Activated naive CD4-positive, alpha-beta T cell treated with anti-CD3 and anti-CD28 coated beads for 36 hours (primary cell): ENCODE measurements at regions of chr6 and their contacts with region 1.

Region 1: DNA sequence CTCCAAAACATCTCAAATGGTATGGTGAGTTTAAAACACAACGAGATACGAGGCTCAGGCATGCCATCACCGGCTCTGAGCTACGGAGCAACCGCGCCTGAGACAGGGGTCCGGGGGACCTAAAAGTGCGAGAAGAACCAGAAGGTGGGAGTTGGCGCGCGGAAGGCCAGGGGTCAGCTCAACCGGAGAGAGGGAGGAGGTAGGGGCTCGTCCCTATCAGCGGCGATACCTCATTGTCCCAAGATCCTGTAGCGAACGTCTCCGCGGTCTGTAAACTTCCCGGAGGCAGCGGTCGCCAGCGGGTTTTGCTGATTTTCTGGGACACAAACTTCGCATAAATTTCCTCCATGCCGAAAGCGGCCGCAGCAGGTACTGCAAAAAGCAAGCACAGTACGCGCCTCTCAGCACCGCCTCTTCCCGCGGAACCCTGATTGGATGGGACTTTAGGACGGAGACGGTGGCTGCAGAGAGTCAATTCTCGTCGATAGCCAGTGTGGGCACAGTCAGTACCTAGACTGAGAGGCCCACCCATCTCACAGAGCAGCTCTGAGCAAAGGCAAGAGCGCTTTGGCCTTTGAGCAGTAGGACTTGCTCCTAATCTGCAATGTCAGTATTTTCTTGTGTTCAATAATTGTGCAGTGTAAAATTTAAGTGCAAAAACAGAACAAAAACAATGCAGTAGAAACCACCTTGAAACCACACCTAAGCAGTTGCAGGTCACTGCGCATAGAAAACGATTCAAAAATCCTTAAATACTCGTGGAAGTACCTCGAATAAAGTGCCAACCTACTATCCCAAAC is at the start of gene NUP43:
- DNase-seq: peak; percentile 99
- H3K4me3 Mint-ChIP-seq: peak within 1 kb of the TSS; percentile 99
- H3K27ac Mint-ChIP-seq: peak within 1 kb of the TSS; percentile 87
- H3K4me1 Mint-ChIP-seq: peaks cover 31% of the 10 kb centered on the region
- H3K27me3 Mint-ChIP-seq: no peaks in the 10 kb centered on the region
- total RNA-seq, gene NUP43: 68.1 to 71.9 TPM

Region 2: DNA sequence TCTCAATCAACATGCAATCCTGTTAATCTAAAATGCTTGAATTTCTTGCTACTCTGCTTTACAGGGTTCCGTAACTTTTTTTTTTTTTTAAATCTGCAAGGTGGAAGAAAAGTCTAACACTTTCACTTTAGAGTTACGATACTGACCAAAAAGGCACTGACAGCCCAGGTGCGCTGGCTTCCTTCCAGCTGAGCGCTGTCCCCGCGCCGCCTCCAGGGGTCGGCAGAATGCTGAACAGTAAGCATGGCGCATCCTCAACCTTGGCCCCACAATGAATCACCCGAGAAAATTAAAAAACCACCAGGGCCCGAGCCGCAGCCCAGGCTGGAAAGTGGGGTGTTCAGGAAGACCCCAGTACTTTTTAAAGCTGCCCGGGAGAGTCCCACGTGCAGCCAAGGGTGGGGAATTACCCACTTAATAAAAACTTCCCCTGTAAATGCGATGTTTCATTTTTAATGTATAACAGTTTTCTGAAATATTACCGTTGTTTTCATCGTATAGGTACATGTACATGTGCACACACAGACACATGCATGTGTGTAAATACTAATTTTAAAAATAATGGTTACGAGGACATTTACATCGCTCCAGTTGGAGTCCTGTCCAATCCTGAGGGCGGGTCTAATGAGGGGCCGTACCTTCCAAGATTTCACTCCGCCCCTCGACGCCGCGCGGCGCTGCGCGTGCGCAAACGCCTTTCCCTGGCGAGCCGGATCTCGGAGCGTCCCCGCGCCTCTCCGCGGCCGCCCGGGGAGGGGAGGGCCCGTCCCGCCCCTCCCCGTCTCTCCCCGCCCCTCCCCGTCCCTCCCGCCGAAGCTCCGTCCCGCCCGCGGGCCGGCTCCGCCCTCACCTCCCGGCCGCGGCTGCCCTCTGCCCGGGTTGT is 180.6 kb before region 1 on chr6 and contains the start of gene GINM1:
- CTCF ChIA-PET with region 1: no interaction called
- intact Hi-C with region 1: loop called (anchors 1 kb)
- DNase-seq: peak; percentile 97
- H3K4me3 Mint-ChIP-seq: peak within 1 kb of the TSS; percentile 92
- H3K27ac Mint-ChIP-seq: peak within 1 kb of the TSS; percentile 89
- H3K4me1 Mint-ChIP-seq: peaks cover 26% of the 10 kb centered on the region
- H3K27me3 Mint-ChIP-seq: no peaks in the 10 kb centered on the region
- total RNA-seq, gene GINM1: 17.6 to 18.4 TPM

Region 3: GRCh38 chr6:149648148-149649145 is 97.9 kb before region 1 on chr6 and contains the start of gene KATNA1:
- CTCF ChIA-PET with region 1: interaction called, 4 read pairs
- intact Hi-C with region 1: loop called (anchors 1 kb)
- DNase-seq: peak; percentile 90
- H3K4me3 Mint-ChIP-seq: peak within 1 kb of the TSS; percentile 79
- H3K27ac Mint-ChIP-seq: peak within 1 kb of the TSS; percentile 65
- H3K4me1 Mint-ChIP-seq: peaks cover 22% of the 10 kb centered on the region
- H3K27me3 Mint-ChIP-seq: no peaks in the 10 kb centered on the region
- total RNA-seq, gene KATNA1: 18.2 to 19.7 TPM

Region 4: DNA sequence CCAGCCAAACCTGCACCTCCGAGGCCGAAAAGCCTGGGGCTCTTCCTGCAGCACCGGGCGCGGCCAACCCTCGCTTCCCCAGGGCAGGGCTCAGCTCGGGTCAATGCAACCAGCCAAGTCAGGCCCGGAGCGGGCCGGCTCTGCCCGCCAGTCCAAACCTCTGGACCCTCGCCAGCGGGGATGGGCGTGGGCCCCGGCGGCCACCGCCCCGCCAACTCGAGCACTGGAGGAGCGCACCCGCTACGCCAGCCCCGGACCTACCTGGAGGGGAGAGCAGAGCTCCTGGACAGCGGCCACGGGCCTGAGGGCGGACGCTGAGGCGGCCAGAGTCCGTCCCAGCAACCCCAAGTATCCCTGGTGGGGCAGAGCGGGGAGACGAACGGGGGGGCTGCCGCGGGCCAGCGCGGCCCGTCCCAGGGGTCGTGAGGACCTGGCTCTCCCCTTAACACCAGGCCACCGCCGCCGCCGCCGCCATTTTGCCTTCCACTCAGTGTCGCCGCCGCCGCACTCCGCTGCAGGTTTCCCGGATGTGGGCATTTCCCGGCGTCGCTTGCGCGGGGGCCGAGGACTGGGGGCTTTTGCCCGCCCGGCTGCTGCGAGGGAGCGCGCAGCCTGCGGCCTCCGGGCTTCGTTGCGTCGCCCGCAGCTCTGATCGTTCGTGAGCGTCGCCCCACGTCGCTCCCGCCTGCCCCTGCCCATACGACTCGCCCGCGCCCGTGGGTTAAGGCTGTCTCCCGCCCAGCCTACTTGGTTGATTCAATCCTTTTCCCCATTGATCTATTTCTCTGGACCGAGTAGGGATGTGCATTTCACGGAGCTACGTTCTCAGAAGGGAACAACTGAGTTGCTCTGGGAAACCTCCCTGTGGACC is 28.5 kb before region 1 on chr6 and contains the start of gene LATS1:
- CTCF ChIA-PET with region 1: interaction called, 6 read pairs
- intact Hi-C with region 1: loop called (anchors 1 kb)
- DNase-seq: peak; percentile 95
- H3K4me3 Mint-ChIP-seq: peak within 1 kb of the TSS; percentile 84
- H3K27ac Mint-ChIP-seq: peak within 1 kb of the TSS; percentile 94
- H3K4me1 Mint-ChIP-seq: peaks cover 25% of the 10 kb centered on the region
- H3K27me3 Mint-ChIP-seq: no peaks in the 10 kb centered on the region
- total RNA-seq, gene LATS1: 18.1 to 19.6 TPM

Region 5: DNA sequence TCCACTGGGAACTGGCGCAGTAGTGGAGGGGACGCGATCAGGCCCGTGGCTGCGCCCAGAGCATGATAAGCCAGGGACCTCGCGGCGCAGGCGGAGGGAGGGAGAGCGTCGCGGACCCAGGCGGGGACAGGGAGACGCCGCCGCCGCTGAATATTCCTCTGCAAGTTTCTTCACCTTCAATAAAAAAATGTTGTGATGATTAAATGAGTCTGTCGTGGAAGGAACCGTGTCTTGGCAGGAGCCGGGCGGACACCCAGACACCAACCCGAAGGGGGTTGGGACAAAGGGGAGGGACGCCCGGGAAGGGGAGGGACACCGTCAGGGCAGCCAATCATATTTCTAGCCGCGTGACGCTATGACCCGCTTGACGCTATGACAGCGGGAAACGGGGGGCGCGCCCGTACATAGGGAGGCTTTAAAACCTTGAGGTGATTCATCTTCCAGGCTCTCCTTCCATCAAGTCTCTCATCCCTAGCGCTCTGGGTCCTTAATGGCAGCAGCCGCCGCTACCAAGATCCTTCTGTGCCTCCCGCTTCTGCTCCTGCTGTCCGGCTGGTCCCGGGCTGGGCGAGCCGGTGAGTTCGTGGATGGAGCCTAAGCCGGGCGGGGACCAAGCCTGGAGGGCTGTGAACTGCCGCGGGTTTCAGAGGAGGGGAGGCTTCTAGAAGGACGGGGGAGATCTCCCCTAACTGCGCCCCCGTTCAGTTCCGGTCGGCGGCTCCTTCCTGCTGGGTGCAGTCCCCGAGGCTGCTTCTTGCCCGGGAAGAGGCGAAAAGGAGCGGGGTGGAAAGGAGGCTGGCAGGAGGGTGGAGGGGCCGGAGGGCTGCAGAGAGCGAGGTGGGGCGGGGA is 195.5 kb after region 1 on chr6 and contains the start of gene ULBP2:
- CTCF ChIA-PET with region 1: no interaction called
- intact Hi-C with region 1: loop called (anchors 1 kb)
- DNase-seq: peak; percentile 96
- H3K4me3 Mint-ChIP-seq: peak within 1 kb of the TSS; percentile 89
- H3K27ac Mint-ChIP-seq: no peak within 1 kb of the TSS
- H3K4me1 Mint-ChIP-seq: peaks cover 32% of the 10 kb centered on the region
- H3K27me3 Mint-ChIP-seq: peaks cover 46% of the 10 kb centered on the region
- total RNA-seq, gene ULBP2: 0.69 to 1.4 TPM

Region 6: GRCh38 chr6:149963462-149964307 is 217.3 kb after region 1 on chr6 and contains the start of gene ULBP1:
- CTCF ChIA-PET with region 1: no interaction called
- intact Hi-C with region 1: loop called (anchors 1 kb)
- DNase-seq: peak; percentile 93
- H3K4me3 Mint-ChIP-seq: peak within 1 kb of the TSS; percentile 90
- H3K27ac Mint-ChIP-seq: peak within 1 kb of the TSS; percentile 78
- H3K4me1 Mint-ChIP-seq: peaks cover 19% of the 10 kb centered on the region
- H3K27me3 Mint-ChIP-seq: peaks cover 63% of the 10 kb centered on the region
- total RNA-seq, gene ULBP1: 2.6 to 2.8 TPM

Region 7: DNA sequence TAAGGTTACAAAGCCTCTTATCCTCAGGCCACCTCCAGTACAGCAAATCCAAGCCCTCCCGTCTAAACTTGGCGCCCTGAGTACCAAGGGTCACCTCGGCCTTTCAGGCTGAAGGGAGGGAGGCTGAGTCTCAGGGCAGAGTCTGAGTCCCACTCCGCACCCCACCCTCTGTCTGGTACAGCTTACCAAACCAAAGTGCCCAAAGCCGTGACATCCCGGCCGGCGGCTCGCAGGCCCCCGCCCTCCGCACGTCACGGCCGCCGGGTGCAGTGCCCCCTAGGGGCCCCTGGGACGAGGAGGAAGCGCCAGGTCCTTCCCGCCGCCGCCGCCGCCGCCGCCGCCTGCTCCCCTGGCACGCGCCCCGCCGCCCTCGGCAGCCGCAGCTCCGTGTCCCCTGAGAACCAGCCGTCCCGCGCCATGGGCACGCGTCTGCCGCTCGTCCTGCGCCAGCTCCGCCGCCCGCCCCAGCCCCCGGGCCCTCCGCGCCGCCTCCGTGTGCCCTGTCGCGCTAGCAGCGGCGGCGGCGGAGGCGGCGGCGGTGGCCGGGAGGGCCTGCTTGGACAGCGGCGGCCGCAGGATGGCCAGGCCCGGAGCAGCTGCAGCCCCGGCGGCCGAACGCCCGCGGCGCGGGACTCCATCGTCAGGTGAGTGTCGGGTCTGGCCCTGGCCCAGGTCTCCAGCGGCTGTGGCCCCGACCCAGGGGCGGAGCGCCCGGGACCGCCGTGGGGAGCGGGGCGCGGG is 1119.2 kb after region 1 on chr6 and contains the start of gene MTHFD1L:
- CTCF ChIA-PET with region 1: no interaction called
- intact Hi-C with region 1: loop called (anchors 2 kb)
- DNase-seq: peak; percentile 79
- H3K4me3 Mint-ChIP-seq: peak within 1 kb of the TSS; percentile 96
- H3K27ac Mint-ChIP-seq: peak within 1 kb of the TSS; percentile 91
- H3K4me1 Mint-ChIP-seq: peaks cover 30% of the 10 kb centered on the region
- H3K27me3 Mint-ChIP-seq: peaks cover 15% of the 10 kb centered on the region
- total RNA-seq, gene MTHFD1L: 181 to 194 TPM